Posterior vena cava (tissue), 2 donors: ENCODE measurements at regions of chr2 and their contacts with region 1.

Region 1: DNA sequence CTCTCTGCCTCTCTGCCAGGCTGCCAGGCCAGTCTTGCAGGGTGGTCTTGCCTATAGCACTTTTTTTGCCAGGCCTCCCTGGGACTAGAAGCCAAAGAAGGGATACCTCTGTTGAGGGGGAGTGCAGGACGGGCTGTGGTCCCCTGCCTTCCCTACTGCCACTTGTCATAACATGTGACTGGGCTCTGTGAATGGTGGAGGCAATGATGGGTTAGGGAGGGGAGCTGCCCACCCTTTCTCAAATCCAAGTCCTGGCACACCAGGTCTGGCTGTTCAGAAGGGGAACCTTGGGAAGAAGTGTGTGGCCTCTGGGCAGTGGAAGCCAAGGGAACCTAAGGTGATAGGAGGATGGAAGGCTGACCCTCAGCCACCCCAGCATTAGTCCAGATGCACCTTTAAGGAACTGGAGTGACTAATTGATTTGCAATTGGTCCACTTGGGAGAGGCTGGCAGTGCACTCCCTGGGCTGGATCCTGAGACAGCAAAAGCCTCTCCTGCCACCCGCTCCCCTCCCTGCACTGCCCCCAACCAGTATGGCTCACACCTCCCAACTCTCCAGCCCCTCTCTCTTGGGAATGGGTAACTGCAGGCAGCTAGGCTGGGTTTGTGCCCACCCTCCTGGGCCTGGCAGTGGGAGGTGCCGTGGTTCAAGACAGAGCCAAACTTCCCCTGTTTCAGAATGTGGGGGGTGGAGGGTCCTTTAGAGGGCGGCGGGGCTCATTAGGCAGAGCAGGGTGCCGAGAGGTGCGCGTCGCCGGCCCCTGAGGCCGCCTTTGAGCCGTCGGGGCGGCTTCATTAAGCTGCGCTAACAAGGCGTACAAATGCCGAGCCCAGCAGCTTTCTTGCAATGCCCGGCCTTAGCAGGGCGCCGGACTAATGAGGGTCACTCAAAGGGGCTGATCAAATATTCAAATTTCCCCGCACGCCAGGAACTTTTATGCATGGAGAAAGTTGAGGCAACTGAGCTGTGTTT is 4.5 kb upstream of the SIX3 start:
- DNase-seq: peak; percentile 62

Region 2: DNA sequence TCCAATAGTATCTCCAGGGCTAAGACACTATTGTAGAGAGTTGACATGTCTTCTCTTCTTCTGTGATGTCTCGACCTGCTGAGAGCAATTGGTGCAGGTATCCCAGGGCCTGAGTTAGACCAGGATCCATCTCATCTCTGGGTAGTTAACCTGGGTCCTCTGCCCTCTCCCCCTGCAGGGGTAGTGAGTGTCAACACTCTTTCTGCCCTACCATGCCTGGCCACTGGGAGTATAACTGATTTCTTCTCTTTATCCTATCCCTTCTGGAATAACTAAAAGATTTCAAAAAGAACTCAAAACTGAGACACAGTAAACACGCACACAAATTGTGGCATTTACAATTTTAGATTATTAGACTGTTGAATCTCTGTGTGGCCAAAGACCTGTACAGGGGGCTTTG is 16.2 kb before region 1 on chr2:
- intact Hi-C with region 1: loop called in 1 of 2 experiments (anchors 1 kb)
- DNase-seq: no peak